ENCODE measurements at regions of chr12 and their contacts with region 1.

Region 1: GRCh38 chr12:68866950-68867349 is 59.0 kb downstream of the MDM2 start:
- DNase-seq: no peak
- H3K4me3 ChIP-seq: no peak overlapping the region
- H3K27ac ChIP-seq: no peak overlapping the region
- H3K4me1 ChIP-seq: peaks cover 0 to 9% (median 3%) of the 10 kb centered on the region in 6 donors
- H3K27me3 ChIP-seq: no peaks in the 10 kb centered on the region
- CTCF ChIP-seq: no peak
- POLR2A ChIP-seq: no peak

Region 2: DNA sequence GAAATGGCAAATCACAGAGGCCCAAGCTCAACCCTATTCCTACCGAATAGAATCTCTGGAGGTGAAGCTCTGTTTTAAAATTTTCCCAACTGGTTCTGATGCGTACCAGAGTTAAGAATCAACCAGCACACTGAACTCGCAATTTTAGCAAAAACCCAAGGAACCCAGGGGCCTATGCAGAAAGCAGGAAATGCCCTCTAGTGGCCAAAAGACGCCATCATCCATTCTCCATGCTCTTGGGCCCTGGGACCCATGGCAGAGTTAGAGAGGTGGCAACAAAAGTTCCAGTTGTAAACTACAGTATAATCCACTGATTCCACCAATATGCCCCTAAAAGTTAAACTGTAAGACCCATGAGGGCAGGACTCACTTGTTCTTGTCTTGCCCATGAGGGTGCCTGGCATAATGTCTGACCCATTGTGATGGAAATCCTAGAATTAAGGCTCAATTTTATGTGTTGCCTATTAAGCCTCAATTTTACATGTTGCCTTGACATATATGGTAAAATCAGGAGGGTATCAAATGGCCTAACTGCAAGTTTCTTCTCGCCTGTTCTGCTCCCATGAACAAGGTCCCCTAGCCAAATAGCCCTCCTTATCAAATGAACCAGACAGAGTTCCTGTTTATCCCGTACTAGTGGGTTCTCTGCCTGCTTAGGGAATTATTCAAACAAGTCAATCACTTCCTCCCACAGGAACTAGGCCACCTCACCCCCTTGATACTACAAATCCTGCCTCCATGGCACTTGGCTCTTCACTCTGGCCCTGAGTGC is 203.6 kb after region 1 on chr12:
- intact Hi-C with region 1: loop called (anchors 10 kb)
- DNase-seq: no peak
- H3K4me3 ChIP-seq: no peak overlapping the region
- H3K27ac ChIP-seq: peak overlapping the region in 2 of 8 donors; percentile 6 to 31
- H3K4me1 ChIP-seq: peaks cover 0 to 14% (median 0%) of the 10 kb centered on the region in 6 donors
- H3K27me3 ChIP-seq: no peaks in the 10 kb centered on the region
- CTCF ChIP-seq: peak; percentile 54 to 93 (median 85)
- POLR2A ChIP-seq: no peak

Region 3: GRCh38 chr12:69157023-69157655 is 290.2 kb after region 1 on chr12:
- intact Hi-C with region 1: loop called (anchors 10 kb)
- DNase-seq: peak; percentile 97
- H3K4me3 ChIP-seq: peak overlapping the region in 1 of 8 donors; percentile 21
- H3K27ac ChIP-seq: no peak overlapping the region
- H3K4me1 ChIP-seq: peaks cover 0 to 22% (median 17%) of the 10 kb centered on the region in 6 donors
- H3K27me3 ChIP-seq: no peaks in the 10 kb centered on the region
- CTCF ChIP-seq: peak; percentile 61 to 98 (median 95)
- POLR2A ChIP-seq: no peak